MCF 10A (cell line): ENCODE measurements at regions of chr7 and their contacts with region 1.

Region 1: GRCh38 chr7:140494867-140495266 is 15.6 kb upstream of the MKRN1 start:
- DNase-seq: no peak
- H3K4me3 Mint-ChIP-seq: no peak overlapping the region
- H3K27ac Mint-ChIP-seq: no peak overlapping the region
- H3K4me1 Mint-ChIP-seq: no peaks in the 10 kb centered on the region
- H3K27me3 Mint-ChIP-seq: no peaks in the 10 kb centered on the region
- CTCF ChIP-seq: no peak

Region 2: GRCh38 chr7:140506788-140507464 is 12.1 kb after region 1 on chr7:
- CTCF ChIA-PET with region 1: interaction called, 15 read pairs
- POLR2A ChIA-PET with region 1: interaction called, 3 read pairs
- intact Hi-C with region 1: no loop called
- DNase-seq: peak; percentile 30
- H3K4me3 Mint-ChIP-seq: no peak overlapping the region
- H3K27ac Mint-ChIP-seq: no peak overlapping the region
- H3K4me1 Mint-ChIP-seq: peaks cover 6% of the 10 kb centered on the region
- H3K27me3 Mint-ChIP-seq: no peaks in the 10 kb centered on the region
- CTCF ChIP-seq: no peak

Region 3: DNA sequence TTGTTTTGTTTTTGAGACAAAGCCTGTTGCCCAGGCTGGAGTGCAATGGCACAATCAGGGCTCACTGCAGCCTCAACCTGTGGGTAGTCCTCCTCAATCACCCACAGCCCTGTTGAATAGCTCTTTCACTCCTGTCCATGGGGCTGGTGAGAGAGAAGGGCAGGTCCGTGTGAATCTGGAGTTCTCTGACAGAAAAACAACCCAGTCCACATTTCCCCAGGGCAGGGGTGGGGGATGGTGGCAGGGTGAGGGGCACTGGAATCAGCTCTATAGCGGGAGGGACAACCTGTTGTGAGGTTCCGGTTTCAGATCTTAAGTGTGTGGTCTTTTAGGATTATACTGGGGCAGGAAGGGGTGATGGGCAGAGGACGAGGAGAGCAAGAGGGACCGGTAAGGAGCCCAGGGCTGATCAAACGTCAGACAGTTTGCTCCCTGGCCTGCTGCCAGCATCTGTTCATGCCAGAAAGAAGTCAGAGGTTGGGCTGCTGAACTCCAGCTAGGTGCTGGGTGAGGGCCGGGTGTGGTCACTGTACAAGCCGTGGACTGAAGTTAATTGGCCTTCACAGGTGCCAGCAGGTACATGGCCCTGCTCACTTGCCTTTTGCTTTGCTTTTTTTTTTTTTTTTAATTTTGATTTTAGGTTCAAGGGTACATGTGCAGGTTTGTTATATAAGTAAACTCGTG is 17.6 kb after region 1 on chr7:
- CTCF ChIA-PET with region 1: interaction called, 15 read pairs
- POLR2A ChIA-PET with region 1: no interaction called
- intact Hi-C with region 1: no loop called
- DNase-seq: peak; percentile 82
- H3K4me3 Mint-ChIP-seq: no peak overlapping the region
- H3K27ac Mint-ChIP-seq: no peak overlapping the region
- H3K4me1 Mint-ChIP-seq: peaks cover 6% of the 10 kb centered on the region
- H3K27me3 Mint-ChIP-seq: no peaks in the 10 kb centered on the region
- CTCF ChIP-seq: no peak